GM10248 (cell line): ENCODE measurements at regions of chr13 and their contacts with region 1.

Region 1: GRCh38 chr13:52862358-52863206 is 14.1 kb upstream of the PCDH8 start:
- DNase-seq: peak; percentile 43
- CTCF ChIP-seq: peak; percentile 33

Region 2: GRCh38 chr13:52850396-52851136 is 12.0 kb before region 1 on chr13:
- CTCF ChIA-PET with region 1: interaction called, 10 read pairs
- POLR2A ChIA-PET with region 1: no interaction called
- DNase-seq: peak; percentile 75
- CTCF ChIP-seq: no peak

Region 3: GRCh38 chr13:52879950-52880741 is 17.6 kb after region 1 on chr13:
- CTCF ChIA-PET with region 1: interaction called, 10 read pairs
- POLR2A ChIA-PET with region 1: no interaction called
- DNase-seq: no peak
- CTCF ChIP-seq: no peak